ENCODE measurements at regions of chr1 and their contacts with region 1.

Region 1: GRCh38 chr1:156456622-156457465 is 43.7 kb downstream of the MEF2D start:
- DNase-seq: peak; percentile 100
- H3K4me3 ChIP-seq: peak overlapping the region; percentile 40 to 63 (median 55)
- H3K27ac ChIP-seq: peak overlapping the region; percentile 94 to 100 (median 99)
- H3K4me1 ChIP-seq: peaks cover 3 to 26% (median 22%) of the 10 kb centered on the region in 4 donors
- H3K27me3 ChIP-seq: no peaks in the 10 kb centered on the region
- CTCF ChIP-seq: no peak
- EP300 ChIP-seq: peak in 3 of 4 donors; percentile 96 to 100 (median 98)
- POLR2A ChIP-seq: peak; percentile 87 to 91

Region 2: DNA sequence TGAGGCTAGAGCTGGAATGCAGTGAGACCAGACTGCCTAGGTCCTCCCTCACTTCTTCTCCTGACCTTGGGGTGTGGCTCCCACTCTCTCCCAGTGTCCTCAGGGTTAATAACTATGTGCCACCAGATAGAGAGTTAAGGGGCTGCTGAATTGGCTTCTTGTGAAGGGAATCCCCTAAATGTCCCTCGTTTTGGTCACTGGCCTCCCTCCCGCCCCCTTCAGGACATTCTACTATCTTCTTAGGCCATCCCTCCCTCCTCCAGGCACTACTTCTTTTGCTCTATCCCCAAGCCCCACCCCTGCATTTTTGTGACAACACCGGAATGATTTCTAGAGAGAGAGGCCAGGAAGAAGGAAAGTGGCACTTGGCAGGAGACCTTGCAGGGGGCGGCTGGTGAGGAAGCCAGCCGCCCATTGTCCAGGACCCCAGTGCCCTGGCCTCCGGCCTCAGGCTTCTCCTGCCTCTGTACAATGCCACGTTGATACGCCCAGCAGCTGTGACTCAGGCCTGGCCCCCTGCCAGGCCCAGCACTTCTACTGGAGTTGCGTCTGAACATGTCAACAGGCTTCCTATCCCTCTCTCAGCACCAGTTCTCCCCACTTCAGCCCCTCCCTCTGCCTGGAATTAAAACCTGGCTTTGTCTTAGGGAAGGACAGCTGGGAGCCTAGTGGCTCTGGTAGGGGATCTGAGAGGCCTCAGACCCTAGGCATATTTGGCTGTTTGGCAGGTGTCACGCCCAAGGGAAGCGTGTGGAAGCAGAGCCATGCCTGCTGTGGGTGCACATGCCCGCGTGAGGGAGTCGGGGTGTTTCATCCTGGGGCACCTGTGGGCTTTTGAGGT is 333.3 kb before region 1 on chr1:
- intact Hi-C with region 1: loop called (anchors 5 kb)
- DNase-seq: peak; percentile 99
- H3K4me3 ChIP-seq: peak overlapping the region in 3 of 4 donors; percentile 28 to 42 (median 39)
- H3K27ac ChIP-seq: peak overlapping the region; percentile 95 to 100 (median 98)
- H3K4me1 ChIP-seq: peaks cover 4 to 100% (median 100%) of the 10 kb centered on the region in 4 donors
- H3K27me3 ChIP-seq: no peaks in the 10 kb centered on the region
- CTCF ChIP-seq: peak in 3 of 4 experiments; percentile 8 to 23 (median 23)
- EP300 ChIP-seq: peak in 2 of 4 donors; percentile 35 to 66
- POLR2A ChIP-seq: peak; percentile 67 to 70

Region 3: DNA sequence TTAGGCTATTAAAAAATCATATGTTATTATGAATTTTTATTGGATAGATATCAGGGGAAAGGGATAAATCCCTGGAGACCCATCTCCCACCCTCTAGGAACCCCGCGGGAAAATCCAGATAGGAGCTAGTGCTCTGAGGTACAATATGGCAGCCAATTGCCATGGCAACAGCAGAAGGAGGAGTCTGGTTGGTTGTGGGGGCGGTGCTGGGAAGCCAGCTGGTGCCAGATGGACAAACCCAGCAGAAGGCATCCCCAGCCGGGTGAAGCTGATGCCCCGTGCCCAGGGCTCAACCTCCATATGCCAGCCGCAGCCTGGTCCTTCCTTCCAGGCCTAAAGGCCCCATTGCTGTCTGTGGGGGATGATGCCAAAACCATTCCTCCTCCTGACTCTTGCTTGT is 49.5 kb before region 1 on chr1:
- intact Hi-C with region 1: no loop called
- DNase-seq: no peak
- H3K4me3 ChIP-seq: no peak overlapping the region
- H3K27ac ChIP-seq: no peak overlapping the region
- H3K4me1 ChIP-seq: no peaks in the 10 kb centered on the region
- H3K27me3 ChIP-seq: peaks cover 3 to 71% (median 26%) of the 10 kb centered on the region in 3 donors
- CTCF ChIP-seq: no peak
- EP300 ChIP-seq: no peak
- POLR2A ChIP-seq: no peak

Region 4: GRCh38 chr1:156480411-156481192 is 23.8 kb after region 1 on chr1:
- intact Hi-C with region 1: loop called (anchors 1 kb)
- DNase-seq: peak; percentile 88
- H3K4me3 ChIP-seq: no peak overlapping the region
- H3K27ac ChIP-seq: peak overlapping the region; percentile 89 to 98 (median 90)
- H3K4me1 ChIP-seq: peaks cover 0 to 97% (median 94%) of the 10 kb centered on the region in 4 donors
- H3K27me3 ChIP-seq: no peaks in the 10 kb centered on the region
- CTCF ChIP-seq: peak; percentile 28 to 74 (median 58)
- EP300 ChIP-seq: no peak
- POLR2A ChIP-seq: no peak

Region 5: DNA sequence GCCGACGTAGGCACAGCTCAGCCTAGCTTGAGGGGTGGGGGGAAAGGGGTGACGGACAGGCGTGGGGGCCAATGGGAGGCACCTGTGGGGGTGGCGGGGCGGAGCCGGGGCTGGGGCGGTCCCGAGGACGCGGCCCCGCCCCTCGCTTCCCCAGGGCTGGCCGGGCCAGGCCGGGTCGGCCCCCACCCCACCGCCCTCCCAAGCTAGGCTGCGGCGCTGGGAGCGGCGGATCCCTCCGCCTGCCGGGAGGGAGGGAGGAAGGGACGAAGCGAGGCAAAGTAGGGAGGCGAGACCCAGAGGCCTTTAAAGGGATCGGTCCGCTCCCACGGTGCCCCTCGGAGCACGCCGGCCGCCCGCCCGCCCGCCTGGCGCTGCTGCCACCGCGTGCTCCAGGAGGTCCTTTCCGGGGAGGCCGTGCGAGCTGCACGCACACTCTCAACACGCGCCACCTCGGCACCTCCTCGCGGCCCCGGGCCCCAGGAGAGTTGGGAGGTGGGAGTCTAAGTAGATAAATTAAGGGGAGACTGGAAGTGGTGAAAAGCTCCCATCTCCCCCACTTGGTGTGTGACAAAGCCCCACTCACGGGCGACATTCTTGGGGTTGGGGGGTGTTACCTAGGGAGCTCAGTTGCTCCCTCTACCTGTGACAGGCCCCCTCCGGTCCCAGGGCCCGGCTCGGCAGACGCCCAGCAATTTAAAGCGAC is 44.1 kb after region 1 on chr1:
- intact Hi-C with region 1: loop called (anchors 1 kb)
- DNase-seq: peak; percentile 98
- H3K4me3 ChIP-seq: peak overlapping the region; percentile 89 to 100 (median 95)
- H3K27ac ChIP-seq: peak overlapping the region; percentile 98 to 100 (median 100)
- H3K4me1 ChIP-seq: peaks cover 0 to 74% (median 73%) of the 10 kb centered on the region in 4 donors
- H3K27me3 ChIP-seq: no peaks in the 10 kb centered on the region
- CTCF ChIP-seq: peak in 3 of 4 experiments; percentile 27 to 36 (median 34)
- EP300 ChIP-seq: peak in 3 of 4 donors; percentile 3 to 75 (median 57)
- POLR2A ChIP-seq: peak; percentile 89 to 91

Region 6: GRCh38 chr1:156601122-156601830 is 144.4 kb after region 1 on chr1 and contains the start of gene GPATCH4:
- intact Hi-C with region 1: loop called (anchors 2 kb)
- DNase-seq: peak; percentile 91
- H3K4me3 ChIP-seq: peak within 1 kb of the TSS; percentile 65 to 73 (median 65)
- H3K27ac ChIP-seq: peak within 1 kb of the TSS; percentile 79 to 84 (median 82)
- H3K4me1 ChIP-seq: peaks cover 0 to 20% (median 18%) of the 10 kb centered on the region in 4 donors
- H3K27me3 ChIP-seq: no peaks in the 10 kb centered on the region
- CTCF ChIP-seq: no peak
- EP300 ChIP-seq: peak in 2 of 4 donors; percentile 4 to 8
- POLR2A ChIP-seq: no peak
- total RNA-seq, gene GPATCH4: 12.2 to 22.9 (median 17.3) TPM

Region 7: GRCh38 chr1:156608036-156608674 is 151.3 kb after region 1 on chr1:
- intact Hi-C with region 1: loop called (anchors 2 kb)
- DNase-seq: peak; percentile 80
- H3K4me3 ChIP-seq: no peak overlapping the region
- H3K27ac ChIP-seq: peak overlapping the region in 2 of 4 donors; percentile 12 to 46
- H3K4me1 ChIP-seq: peaks cover 0 to 9% (median 7%) of the 10 kb centered on the region in 4 donors
- H3K27me3 ChIP-seq: no peaks in the 10 kb centered on the region
- CTCF ChIP-seq: peak; percentile 77 to 89 (median 82)
- EP300 ChIP-seq: no peak
- POLR2A ChIP-seq: no peak

Region 8: GRCh38 chr1:156659994-156660751 is 203.3 kb after region 1 on chr1:
- intact Hi-C with region 1: loop called (anchors 5 kb)
- DNase-seq: peak; percentile 98
- H3K4me3 ChIP-seq: peak overlapping the region in 2 of 4 donors; percentile 16 to 20
- H3K27ac ChIP-seq: peak overlapping the region; percentile 77 to 86 (median 80)
- H3K4me1 ChIP-seq: peaks cover 0 to 83% (median 77%) of the 10 kb centered on the region in 4 donors
- H3K27me3 ChIP-seq: no peaks in the 10 kb centered on the region
- CTCF ChIP-seq: peak; percentile 98 to 100 (median 100)
- EP300 ChIP-seq: no peak
- POLR2A ChIP-seq: no peak

Measured in sigmoid colon (tissue), 7 donors.